ENCODE measurements at regions of chr9 and their contacts with region 1.

Region 1: DNA sequence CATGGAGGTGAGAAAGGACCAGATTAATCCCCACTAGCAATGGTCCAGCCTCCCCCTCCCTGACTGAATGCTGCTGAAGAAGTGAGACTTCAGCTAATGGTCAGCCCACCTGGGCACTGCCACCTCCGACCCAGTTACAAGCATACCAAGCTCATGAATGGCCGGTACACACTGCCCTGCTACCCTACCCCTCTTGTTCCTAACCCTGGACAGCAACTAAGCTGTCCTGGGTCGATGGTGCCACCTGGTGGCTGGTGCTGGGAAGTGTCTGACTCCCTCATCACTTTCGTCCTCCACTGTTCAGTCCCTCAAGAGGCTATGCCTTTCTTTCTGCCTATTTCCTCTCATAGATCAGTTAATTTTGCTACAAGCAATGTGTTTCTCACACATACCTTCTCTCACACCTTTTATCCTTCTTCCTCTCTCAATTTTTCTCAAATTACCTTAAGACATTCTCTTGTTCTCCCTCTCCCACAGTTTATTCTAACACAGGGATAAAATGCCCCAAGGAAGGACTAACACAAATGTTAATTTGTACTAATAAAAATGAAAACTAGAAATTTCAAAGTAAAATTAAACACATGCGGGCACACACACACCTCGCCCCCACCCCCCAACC is 42.4 kb downstream of the PAX5 start:
- DNase-seq: peak; percentile 76
- H3K27ac ChIP-seq: no peak overlapping the region
- CTCF ChIP-seq: peak; percentile 76

Region 2: GRCh38 chr9:36873247-36873875 is 118.3 kb before region 1 on chr9:
- CTCF ChIA-PET with region 1: interaction called, 62 read pairs
- POLR2A ChIA-PET with region 1: no interaction called
- DNase-seq: peak; percentile 85
- H3K27ac ChIP-seq: no peak overlapping the region
- CTCF ChIP-seq: peak; percentile 99

Measured in RWPE1 (cell line).